K562 (cell line): ENCODE measurements at regions of chr5 and their contacts with region 1.

Region 1: DNA sequence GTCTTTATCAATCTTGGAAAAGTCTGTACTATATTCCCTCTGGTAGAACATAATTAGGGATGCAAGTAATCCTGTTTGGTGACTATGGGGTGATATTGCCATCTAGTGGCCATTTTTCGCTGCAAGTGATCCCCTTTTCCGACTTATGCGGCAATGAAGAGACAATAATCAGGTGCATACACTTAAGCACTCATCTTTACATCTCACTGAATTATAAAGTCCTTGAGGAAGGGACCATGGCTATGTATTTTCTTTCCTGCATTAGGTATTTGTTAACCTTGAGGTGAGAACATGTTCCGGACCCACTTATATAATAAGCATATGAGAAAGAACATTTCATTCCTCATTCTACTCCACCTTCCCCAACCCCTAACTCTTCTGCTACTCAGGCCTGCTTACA is 19.6 kb upstream of the LIX1 start:
- DNase-seq: peak; percentile 37 to 79 (median 44)
- ATAC-seq: peak; percentile 91
- H3K4me3 ChIP-seq: no peak overlapping the region
- H3K27ac ChIP-seq: no peak overlapping the region
- H3K4me1 ChIP-seq: no peaks in the 10 kb centered on the region
- H3K27me3 ChIP-seq: no peaks in the 10 kb centered on the region
- CTCF ChIP-seq: peak; percentile 75 to 87 (median 77)
- EP300 ChIP-seq: no peak
- POLR2A ChIP-seq: no peak
- RAD21 ChIP-seq: peak; percentile 85 to 91

Region 2: DNA sequence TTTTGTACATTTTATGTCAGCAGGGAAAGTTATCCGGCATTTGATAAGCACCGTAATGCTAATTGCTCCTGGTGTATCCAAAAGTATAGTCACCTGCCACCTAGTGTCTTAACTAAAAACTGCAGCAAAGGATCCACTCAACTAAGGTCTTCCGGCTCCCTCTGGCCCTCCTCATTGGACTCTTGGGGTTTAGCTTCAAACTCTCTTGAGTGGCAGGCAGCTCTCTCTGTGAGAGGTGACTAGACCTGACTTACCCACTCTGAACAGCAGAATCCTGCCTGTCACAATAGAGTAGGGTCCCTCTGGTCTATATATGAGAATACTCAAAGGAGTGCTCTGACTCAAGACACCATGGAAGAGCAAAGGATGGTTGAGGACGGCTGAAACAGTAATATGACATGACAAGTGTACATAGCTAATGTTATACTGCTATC is 560.2 kb before region 1 on chr5:
- CTCF ChIA-PET with region 1: no interaction called
- POLR2A ChIA-PET with region 1: no interaction called
- in situ Hi-C with region 1: loop called (anchors 10 kb)
- intact Hi-C with region 1: no loop called
- DNase-seq: peak; percentile 60 to 75 (median 66)
- ATAC-seq: peak; percentile 89
- H3K4me3 ChIP-seq: no peak overlapping the region
- H3K27ac ChIP-seq: no peak overlapping the region
- H3K4me1 ChIP-seq: no peaks in the 10 kb centered on the region
- H3K27me3 ChIP-seq: no peaks in the 10 kb centered on the region; a peak in 1 of 5 replicates
- CTCF ChIP-seq: peak; percentile 66 to 72 (median 69)
- EP300 ChIP-seq: no peak
- POLR2A ChIP-seq: no peak
- RAD21 ChIP-seq: peak; percentile 63 to 81

Region 3: GRCh38 chr5:96687812-96688453 is 474.1 kb before region 1 on chr5:
- CTCF ChIA-PET with region 1: no interaction called
- POLR2A ChIA-PET with region 1: no interaction called
- in situ Hi-C with region 1: no loop called
- intact Hi-C with region 1: loop called (anchors 5 kb)
- DNase-seq: peak; percentile 57 to 74 (median 66)
- ATAC-seq: peak; percentile 96
- H3K4me3 ChIP-seq: no peak overlapping the region
- H3K27ac ChIP-seq: no peak overlapping the region
- H3K4me1 ChIP-seq: peaks cover 0 to 4% of the 10 kb centered on the region in 2 experiments; a peak in 2 of 5 replicates
- H3K27me3 ChIP-seq: peaks cover under 1 to 3% of the 10 kb centered on the region in 2 experiments; a peak in 1 of 5 replicates
- CTCF ChIP-seq: peak; percentile 59 to 90 (median 60); a peak in 5 of 6 replicates
- EP300 ChIP-seq: 0 out of 2 replicates have a peak, but pooled peaks have one; percentile 13
- POLR2A ChIP-seq: no peak
- RAD21 ChIP-seq: peak; percentile 87 to 94

Region 4: DNA sequence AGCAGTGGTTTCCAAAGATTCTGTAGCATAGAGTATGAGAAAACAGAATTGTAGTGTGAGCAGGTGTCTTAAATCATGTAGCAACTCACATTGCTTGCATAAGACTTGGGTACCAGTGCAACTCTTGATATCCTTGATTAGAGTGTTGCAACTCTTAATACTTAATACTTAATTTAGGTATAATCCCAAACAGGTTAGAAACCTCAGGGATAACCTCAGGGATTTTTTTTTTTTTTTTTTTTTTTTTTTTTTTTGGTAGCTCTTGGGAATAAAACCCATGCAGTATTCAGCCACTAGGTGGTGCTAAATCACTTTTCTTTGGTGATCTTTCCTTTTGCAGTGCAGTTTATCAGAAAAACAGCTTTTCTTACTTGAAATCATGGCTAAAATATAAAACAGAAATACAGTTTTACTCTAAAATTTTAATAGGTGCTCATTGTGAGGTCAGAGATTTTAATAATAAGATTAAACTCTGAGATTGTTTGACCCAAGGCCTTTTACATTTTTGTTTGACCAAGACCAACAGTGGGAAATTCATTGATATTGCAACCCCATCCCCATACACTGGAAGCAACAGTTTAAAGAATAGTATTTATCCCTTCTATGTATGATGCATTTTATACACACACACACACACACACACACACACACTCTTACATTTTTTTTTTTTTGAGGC is 409.6 kb before region 1 on chr5:
- CTCF ChIA-PET with region 1: interaction called, 30 read pairs
- POLR2A ChIA-PET with region 1: no interaction called
- in situ Hi-C with region 1: loop called (anchors 5 kb)
- intact Hi-C with region 1: loop called (anchors 1 kb)
- DNase-seq: peak; percentile 47 to 76 (median 49)
- ATAC-seq: peak; percentile 68; the same call in 2 of the 3 replicates
- H3K4me3 ChIP-seq: no peak overlapping the region
- H3K27ac ChIP-seq: no peak overlapping the region
- H3K4me1 ChIP-seq: no peaks in the 10 kb centered on the region
- H3K27me3 ChIP-seq: no peaks in the 10 kb centered on the region
- CTCF ChIP-seq: peak; percentile 41 to 74 (median 42); a peak in 4 of 6 replicates
- EP300 ChIP-seq: no peak
- POLR2A ChIP-seq: no peak
- RAD21 ChIP-seq: peak; percentile 50 to 55

Region 5: GRCh38 chr5:96876292-96876850 is 285.7 kb before region 1 on chr5 and contains the start of gene ERAP2:
- CTCF ChIA-PET with region 1: interaction called, 3 read pairs
- POLR2A ChIA-PET with region 1: no interaction called
- in situ Hi-C with region 1: loop called (anchors 5 kb)
- intact Hi-C with region 1: no loop called
- DNase-seq: peak; percentile 20 to 56 (median 36)
- ATAC-seq: peak; percentile 72
- H3K4me3 ChIP-seq: peak within 1 kb of the TSS; percentile 52
- H3K27ac ChIP-seq: peak within 1 kb of the TSS; percentile 80
- H3K4me1 ChIP-seq: peaks cover 0 to 22% of the 10 kb centered on the region in 2 experiments; a peak in 3 of 5 replicates
- H3K27me3 ChIP-seq: no peaks in the 10 kb centered on the region
- CTCF ChIP-seq: no peak
- EP300 ChIP-seq: no peak
- POLR2A ChIP-seq: no peak; the same call in 1 of the 2 replicates
- RAD21 ChIP-seq: 0 out of 4 replicates have a peak, but pooled peaks of 1 of the 2 experiments have one; percentile 6
- polyA plus RNA-seq, gene ERAP2: 0.93 to 1.2 TPM

Region 6: DNA sequence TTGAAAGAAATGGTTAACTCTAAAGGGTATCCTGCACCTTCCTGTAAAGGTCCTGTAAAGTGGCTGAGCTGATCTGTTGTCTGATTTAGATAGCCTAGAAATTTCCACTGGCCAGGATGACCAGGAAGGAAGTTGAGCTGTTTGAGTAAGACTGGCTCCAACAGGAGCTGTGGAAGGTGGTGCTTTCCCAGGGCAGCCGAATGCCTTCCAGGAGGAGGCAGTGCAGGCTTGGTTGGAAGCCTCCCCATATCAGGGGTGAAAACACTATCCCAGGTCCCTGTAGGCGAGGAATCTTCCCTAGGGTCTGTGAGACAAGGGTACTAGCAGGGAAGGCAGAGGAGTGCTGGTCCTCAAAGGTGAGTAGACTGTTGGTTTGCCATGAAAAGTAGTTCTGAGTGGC is 118.0 kb before region 1 on chr5:
- CTCF ChIA-PET with region 1: interaction called, 14 read pairs
- POLR2A ChIA-PET with region 1: no interaction called
- in situ Hi-C with region 1: no loop called
- intact Hi-C with region 1: loop called (anchors 1 kb)
- DNase-seq: peak in 2 of 4 experiments; percentile 17 to 44
- ATAC-seq: peak; percentile 85
- H3K4me3 ChIP-seq: no peak overlapping the region
- H3K27ac ChIP-seq: no peak overlapping the region
- H3K4me1 ChIP-seq: no peaks in the 10 kb centered on the region; a peak in 2 of 5 replicates
- H3K27me3 ChIP-seq: no peaks in the 10 kb centered on the region; a peak in 1 of 5 replicates
- CTCF ChIP-seq: peak; percentile 62 to 68 (median 63)
- EP300 ChIP-seq: no peak
- POLR2A ChIP-seq: no peak
- RAD21 ChIP-seq: peak; percentile 55 to 76